ENCODE measurements at regions of chr22 and their contacts with region 1.

Region 1: DNA sequence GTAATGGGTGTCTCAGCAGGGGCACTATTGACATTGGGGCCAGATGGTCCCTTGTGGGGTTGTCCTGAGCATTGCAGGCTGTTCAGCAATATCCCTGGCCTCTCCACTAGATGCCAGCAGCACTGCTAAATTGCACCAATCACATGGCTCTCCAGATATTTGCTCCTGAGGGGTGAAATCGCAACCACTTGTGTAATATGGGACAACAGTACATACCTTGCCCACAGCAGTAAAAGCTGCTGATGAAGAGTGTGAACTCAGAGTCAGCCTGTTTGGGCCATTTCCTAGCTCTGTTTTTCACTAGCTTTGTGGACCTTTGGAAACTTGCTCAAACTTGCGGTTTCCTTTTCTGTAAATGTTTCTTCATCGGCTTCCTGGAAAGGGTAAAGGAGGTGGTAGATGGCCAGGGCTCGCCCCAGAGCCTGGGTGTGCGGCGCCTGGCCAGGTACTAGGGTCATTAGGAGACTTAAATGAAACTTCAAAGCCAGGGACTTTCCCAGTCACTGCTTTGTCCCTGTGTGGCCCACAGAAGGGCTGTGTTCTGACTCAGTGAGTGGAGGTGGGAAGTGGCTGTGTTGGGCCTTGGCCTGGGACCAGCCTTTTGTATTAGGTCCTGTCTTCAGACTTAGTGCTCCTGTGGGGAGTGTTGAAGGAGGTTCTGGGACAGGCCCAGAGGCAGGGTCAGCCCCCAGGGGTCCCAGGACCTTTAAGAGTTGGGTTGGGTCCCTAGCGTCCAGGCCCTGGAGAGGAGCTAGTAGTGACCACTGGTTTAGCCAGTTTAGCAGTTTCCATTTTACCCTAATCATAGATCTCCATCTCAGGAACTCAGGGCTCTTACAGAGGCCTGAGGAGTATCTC is 13.1 kb downstream of the NCF4 start:
- DNase-seq: peak in 3 of 5 donors; percentile 30 to 44 (median 32)
- ATAC-seq: peak; percentile 78 to 87 (median 84)
- H3K4me3 ChIP-seq: peak overlapping the region in 1 of 12 donors; percentile 2
- H3K27ac ChIP-seq: peak overlapping the region in 11 of 12 donors; percentile 3 to 87 (median 50)
- H3K4me1 ChIP-seq: peaks cover 0 to 25% (median 11%) of the 10 kb centered on the region in 12 donors
- H3K27me3 ChIP-seq: peaks cover 0 to 28% (median 4%) of the 10 kb centered on the region in 9 donors
- CTCF ChIP-seq: peak; percentile 20 to 58 (median 46)
- POLR2A ChIP-seq: no peak

Region 2: DNA sequence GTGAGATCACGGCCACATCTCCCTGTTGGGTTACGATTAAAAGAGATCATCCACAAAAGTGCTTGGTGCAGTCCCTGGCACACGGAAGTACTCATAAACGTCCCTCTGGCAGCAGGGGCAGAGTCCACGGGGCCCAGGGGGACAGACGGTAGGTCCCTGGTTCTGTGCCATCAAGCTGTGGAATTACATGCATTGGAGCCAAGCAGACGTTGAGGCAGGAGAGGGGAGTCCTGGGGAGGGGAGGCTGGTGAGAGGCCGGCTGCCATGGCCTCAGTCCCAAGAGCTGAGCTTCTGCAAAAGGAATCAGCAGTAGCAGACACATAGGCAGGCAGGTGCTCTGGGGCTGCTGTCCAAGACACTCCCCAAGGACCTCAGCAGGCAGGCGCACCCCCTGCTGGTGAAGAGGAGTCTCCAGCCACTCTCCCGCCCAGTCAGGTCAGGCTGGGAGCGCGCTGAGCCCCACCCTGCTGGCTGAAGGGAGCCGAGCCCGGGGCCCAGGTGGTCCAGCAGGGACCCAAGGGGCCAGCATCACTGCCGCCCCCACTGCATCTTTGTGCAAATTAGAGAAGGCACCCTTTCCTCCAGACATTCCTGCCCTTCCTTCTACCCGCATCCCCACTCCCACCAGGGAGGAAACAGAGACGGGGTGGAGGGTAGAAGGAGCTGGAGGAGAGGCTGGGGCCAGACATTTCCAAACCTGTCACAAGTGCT is 170.1 kb after region 1 on chr22:
- intact Hi-C with region 1: loop called in 5 of 10 experiments (anchors 1 to 10 kb)
- DNase-seq: peak; percentile 54 to 78 (median 69)
- ATAC-seq: peak; percentile 72 to 96 (median 88)
- H3K4me3 ChIP-seq: no peak overlapping the region
- H3K27ac ChIP-seq: no peak overlapping the region
- H3K4me1 ChIP-seq: peaks cover 0 to 7% (median 0%) of the 10 kb centered on the region in 12 donors
- H3K27me3 ChIP-seq: peaks cover 0 to 6% (median 0%) of the 10 kb centered on the region in 9 donors
- CTCF ChIP-seq: peak; percentile 42 to 79 (median 58)
- POLR2A ChIP-seq: no peak

Measured in heart left ventricle (tissue), 16 donors.